Activated T-helper 2 cell treated with anti-CD3 and anti-CD28 coated beads, Interferon-gamma antibody, Interleukin-2, Interleukin-4, amounts not matched to agents 10 μg/mL and 5 μg/mL and 100 μg/mL, durations not matched to agents 14 hours and 24 hours and 36 hours (primary cell): ENCODE measurements at regions of chr17 and their contacts with region 1.

Region 1: DNA sequence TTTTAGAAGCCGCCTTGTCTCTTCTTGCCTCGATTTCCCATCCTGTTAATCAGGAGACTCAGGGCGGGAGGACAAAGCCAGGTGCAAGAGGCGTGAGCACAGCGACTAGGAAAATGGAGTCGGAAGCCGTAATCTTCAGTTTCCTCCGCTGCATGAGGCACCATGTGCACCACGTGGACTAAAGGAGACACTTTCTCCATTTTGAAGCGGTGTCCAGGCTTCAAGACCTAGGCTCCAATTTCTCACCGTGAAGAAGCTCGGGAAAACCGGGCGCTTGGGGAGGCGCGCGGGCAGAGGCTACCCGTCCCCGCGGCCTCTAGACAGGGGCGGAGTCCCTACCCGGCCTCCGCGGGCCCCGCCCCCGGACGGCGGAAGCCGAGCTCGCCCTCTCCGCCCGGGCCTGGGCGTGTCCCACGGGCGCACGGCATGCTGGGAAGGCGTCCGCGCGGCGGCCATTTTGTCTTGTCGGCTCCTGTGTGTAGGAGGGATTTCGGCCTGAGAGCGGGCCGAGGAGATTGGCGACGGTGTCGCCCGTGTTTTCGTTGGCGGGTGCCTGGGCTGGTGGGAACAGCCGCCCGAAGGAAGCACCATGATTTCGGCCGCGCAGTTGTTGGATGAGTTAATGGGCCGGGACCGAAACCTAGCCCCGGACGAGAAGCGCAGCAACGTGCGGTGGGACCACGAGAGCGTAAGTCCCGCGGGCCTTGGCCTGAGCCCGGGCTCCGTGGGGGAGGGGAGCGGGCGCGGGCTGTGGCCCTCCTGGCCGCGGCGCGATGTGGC is at the start of gene LUC7L3:
- DNase-seq: peak; percentile 94
- H3K4me3 Mint-ChIP-seq: peak within 1 kb of the TSS; percentile 94
- H3K27ac Mint-ChIP-seq: peak within 1 kb of the TSS; percentile 99
- H3K4me1 Mint-ChIP-seq: peaks cover 14% of the 10 kb centered on the region
- H3K27me3 Mint-ChIP-seq: no peaks in the 10 kb centered on the region
- total RNA-seq, gene LUC7L3: 115 and 134 TPM in 2 replicates

Region 2: DNA sequence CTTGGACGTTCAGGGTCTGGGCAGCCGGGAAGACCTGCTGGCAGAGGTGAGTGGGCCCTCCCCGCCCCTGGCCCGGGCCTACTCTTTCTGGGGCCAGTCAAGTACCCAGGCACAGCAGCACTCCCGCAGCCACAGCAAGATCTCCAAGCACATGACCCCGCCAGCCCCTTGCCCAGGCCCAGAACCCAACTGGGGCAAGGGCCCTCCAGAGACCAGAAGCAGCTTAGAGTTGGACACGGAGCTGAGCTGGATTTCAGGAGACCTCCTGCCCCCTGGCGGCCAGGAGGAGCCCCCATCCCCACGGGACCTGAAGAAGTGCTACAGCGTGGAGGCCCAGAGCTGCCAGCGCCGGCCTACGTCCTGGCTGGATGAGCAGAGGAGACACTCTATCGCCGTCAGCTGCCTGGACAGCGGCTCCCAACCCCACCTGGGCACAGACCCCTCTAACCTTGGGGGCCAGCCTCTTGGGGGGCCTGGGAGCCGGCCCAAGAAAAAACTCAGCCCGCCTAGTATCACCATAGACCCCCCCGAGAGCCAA is 93.2 kb before region 1 on chr17:
- intact Hi-C with region 1: no loop called
- DNase-seq: peak; percentile 40
- H3K4me3 Mint-ChIP-seq: no peak overlapping the region
- H3K27ac Mint-ChIP-seq: no peak overlapping the region
- H3K4me1 Mint-ChIP-seq: peaks cover 4% of the 10 kb centered on the region
- H3K27me3 Mint-ChIP-seq: peaks cover 32% of the 10 kb centered on the region

Region 3: GRCh38 chr17:50707289-50708049 is 11.9 kb before region 1 on chr17 and contains the start of gene ANKRD40:
- intact Hi-C with region 1: loop called (anchors 1 kb)
- DNase-seq: peak; percentile 91
- H3K4me3 Mint-ChIP-seq: peak within 1 kb of the TSS; percentile 94
- H3K27ac Mint-ChIP-seq: peak within 1 kb of the TSS; percentile 95
- H3K4me1 Mint-ChIP-seq: peaks cover 28% of the 10 kb centered on the region
- H3K27me3 Mint-ChIP-seq: peaks cover 3% of the 10 kb centered on the region
- total RNA-seq, gene ANKRD40: 37.8 and 39.4 TPM in 2 replicates

Region 4: GRCh38 chr17:50783193-50783660 is 63.9 kb after region 1 on chr17:
- intact Hi-C with region 1: no loop called
- DNase-seq: peak; percentile 75
- H3K4me3 Mint-ChIP-seq: no peak overlapping the region
- H3K27ac Mint-ChIP-seq: no peak overlapping the region
- H3K4me1 Mint-ChIP-seq: peaks cover 19% of the 10 kb centered on the region
- H3K27me3 Mint-ChIP-seq: peaks cover 58% of the 10 kb centered on the region